ENCODE measurements at regions of chr6 and their contacts with region 1.

Region 1: DNA sequence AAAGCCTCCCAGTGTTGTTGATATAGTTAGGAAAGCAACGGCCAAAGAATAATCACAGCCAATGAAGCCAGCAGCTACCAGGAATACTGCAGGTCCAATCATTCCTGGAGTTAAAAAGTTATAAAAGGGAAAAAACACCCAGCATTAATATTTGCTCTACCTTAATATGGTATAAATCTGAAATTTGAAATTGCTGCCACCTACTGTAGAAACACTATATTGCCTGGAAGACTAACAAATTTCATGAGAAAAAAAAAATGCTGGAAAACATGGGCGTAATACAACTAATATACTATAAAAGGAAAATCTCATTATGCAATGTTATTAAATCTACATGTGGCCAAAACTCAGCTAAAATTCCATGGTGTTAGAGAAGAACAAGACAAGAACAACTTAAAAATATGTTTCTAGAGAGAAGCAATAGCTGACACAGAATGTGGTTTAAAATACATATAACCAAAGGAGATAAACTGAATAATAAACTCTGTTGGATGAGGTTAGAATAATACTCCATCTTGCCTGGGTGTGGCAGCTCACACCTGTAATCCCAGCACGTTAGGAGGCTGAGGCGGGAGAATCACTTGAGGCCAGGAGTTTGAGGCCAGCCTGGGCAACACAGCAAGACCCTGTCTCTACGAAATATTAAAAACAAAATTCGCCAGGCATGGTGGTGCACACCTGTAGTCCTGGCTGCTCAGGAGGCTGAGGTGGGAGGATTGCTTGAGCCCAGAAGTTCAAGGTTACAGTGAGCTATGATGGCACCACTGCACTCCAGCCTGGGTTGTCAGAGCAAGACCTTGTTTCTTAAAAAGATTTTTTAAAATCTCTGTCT is 43.1 kb downstream of the SLC17A5 start:
- DNase-seq: peak; percentile 76
- ATAC-seq: peak; percentile 64
- H3K4me3 ChIP-seq: no peak overlapping the region
- H3K27ac ChIP-seq: no peak overlapping the region
- H3K4me1 ChIP-seq: no peaks in the 10 kb centered on the region
- H3K27me3 ChIP-seq: no peaks in the 10 kb centered on the region
- CTCF ChIP-seq: peak; percentile 67

Region 2: DNA sequence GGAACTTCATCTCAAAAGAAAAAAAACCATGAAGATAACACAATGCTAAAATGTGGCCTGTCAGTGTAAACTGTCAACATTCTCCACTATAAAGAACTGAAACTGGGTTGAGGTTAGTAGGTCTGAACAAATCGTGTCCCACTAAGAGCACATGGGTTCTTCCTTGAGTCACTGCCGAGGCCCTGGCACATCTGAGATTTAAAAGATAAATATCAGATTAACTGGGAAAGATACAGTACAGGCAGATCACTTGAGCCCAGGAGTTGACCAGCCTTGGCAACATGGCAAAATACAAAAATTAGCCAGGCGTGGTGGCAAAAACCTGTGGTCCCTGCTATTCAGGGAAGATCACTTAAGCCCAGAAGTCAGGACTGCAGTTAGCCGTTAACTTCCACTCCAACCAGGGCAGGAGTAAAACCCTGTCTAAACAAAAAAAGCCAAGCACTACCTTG is 95.4 kb before region 1 on chr6:
- CTCF ChIA-PET with region 1: no interaction called
- POLR2A ChIA-PET with region 1: interaction called, 3 read pairs
- intact Hi-C with region 1: loop called (anchors 1 kb)
- DNase-seq: peak; percentile 11
- ATAC-seq: peak; percentile 2; the same call in 1 of the 2 replicates
- H3K4me3 ChIP-seq: no peak overlapping the region
- H3K27ac ChIP-seq: peak overlapping the region; percentile 26; the same call in 1 of the 2 replicates
- H3K4me1 ChIP-seq: peaks cover 10% of the 10 kb centered on the region; the same call in 1 of the 2 replicates
- H3K27me3 ChIP-seq: no peaks in the 10 kb centered on the region
- CTCF ChIP-seq: no peak

Region 3: DNA sequence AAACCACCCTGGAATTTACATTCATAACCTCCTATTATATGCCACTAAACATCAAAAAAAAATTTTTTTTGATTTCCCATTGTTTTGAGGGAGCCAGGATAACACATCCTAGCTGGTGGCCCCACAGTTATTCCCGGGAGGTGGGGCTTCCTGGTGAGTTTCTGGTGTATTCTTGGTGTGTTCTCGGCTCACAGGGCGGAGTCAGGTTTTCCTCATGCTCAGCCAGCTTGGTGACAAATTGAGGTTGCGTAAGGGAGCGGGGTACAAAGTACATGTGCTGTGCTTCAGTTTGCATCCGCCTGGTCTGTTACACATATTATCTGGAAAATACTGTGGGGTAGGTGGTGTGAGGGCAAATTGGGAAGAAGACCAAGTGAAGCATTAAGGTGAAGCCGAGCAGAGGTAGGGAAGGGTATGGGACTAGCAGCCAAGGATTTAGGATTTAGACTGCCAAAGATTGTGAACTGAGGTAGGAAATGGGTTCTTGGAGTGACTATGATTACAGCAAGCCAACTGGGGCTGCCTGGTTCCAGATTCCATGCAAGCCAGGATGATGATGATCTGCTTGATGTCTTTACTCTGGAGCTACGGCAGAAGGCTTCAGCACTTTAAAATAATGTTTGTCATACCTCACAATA is 43.6 kb before region 1 on chr6:
- CTCF ChIA-PET with region 1: no interaction called
- POLR2A ChIA-PET with region 1: no interaction called
- intact Hi-C with region 1: no loop called
- DNase-seq: no peak
- ATAC-seq: no peak
- H3K4me3 ChIP-seq: no peak overlapping the region
- H3K27ac ChIP-seq: no peak overlapping the region
- H3K4me1 ChIP-seq: no peaks in the 10 kb centered on the region
- H3K27me3 ChIP-seq: no peaks in the 10 kb centered on the region
- CTCF ChIP-seq: no peak

Region 4: DNA sequence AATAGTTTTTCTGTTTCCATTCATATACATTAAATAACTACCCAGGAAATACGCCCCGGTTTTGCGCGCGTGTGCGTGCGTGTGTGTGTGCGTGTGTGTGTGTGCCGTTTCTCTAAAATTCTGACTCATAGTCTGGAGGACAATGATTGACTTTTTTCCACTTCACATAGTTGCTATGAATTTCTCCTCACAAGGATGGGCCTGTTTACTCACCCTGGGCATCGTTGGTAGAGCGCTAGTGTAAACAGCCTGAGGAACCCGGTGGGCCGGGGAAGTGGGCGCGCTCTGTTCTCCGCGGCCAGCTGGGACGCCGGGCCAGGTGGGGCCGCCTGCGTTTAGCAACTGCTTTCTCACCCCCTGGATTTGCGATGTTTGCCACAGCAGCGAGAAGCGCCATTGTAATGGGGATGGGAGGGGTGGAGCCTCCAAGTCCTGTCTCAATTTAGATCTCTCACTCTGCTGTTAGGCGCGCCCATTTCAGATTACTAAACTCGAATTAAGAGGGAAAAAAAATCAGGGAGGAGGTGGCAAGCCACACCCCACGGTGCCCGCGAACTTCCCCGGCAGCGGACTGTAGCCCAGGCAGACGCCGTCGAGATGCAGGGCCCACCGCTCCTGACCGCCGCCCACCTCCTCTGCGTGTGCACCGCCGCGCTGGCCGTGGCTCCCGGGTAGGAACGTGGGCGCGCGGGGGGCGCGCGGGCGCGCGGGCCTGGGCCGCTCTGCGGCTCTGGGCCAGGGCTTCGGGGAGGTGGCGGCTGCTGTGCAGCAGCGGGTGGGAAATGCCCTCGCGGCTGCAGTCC is 85.2 kb after region 1 on chr6 and contains the start of gene CD109:
- CTCF ChIA-PET with region 1: no interaction called
- POLR2A ChIA-PET with region 1: no interaction called
- intact Hi-C with region 1: no loop called
- DNase-seq: peak; percentile 77
- ATAC-seq: peak; percentile 77
- H3K4me3 ChIP-seq: peak within 1 kb of the TSS; percentile 84
- H3K27ac ChIP-seq: peak within 1 kb of the TSS; percentile 98
- H3K4me1 ChIP-seq: peaks cover 32% of the 10 kb centered on the region
- H3K27me3 ChIP-seq: no peaks in the 10 kb centered on the region
- CTCF ChIP-seq: no peak
- total RNA-seq, gene CD109: 16.8 and 19.1 TPM in 2 replicates

Region 5: DNA sequence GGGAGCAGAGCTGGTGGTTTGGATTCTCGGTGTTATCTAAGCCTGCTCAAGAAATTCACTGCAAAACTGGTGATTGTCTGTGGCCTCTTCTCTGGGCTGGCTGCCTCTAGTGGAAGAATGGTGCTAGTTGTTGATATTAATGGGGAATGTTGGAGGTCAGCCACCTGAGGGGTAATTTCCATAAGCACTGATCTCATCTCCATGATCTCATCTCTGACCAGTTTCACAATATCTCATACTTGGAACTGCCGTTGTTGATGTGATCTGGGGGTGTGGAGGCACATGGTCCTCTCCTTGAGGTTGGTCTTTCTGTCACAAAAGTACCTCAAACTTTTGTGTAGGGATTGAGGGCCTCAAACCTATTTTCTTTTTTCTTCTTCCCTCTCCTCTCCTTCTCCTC is 187.9 kb after region 1 on chr6:
- CTCF ChIA-PET with region 1: no interaction called
- POLR2A ChIA-PET with region 1: no interaction called
- intact Hi-C with region 1: no loop called
- DNase-seq: peak; percentile 44
- ATAC-seq: no peak
- H3K4me3 ChIP-seq: no peak overlapping the region
- H3K27ac ChIP-seq: 0 out of 2 replicates have a peak overlapping the region, but pooled peaks have one; percentile 18
- H3K4me1 ChIP-seq: peaks cover 18% of the 10 kb centered on the region
- H3K27me3 ChIP-seq: no peaks in the 10 kb centered on the region
- CTCF ChIP-seq: peak; percentile 35; the same call in 1 of the 2 replicates